GM10248 (cell line): ENCODE measurements at regions of chr2 and their contacts with region 1.

Region 1: GRCh38 chr2:129847043-129847442 is 132.4 kb upstream of the RAB6C start:
- DNase-seq: no peak
- CTCF ChIP-seq: no peak

Region 2: DNA sequence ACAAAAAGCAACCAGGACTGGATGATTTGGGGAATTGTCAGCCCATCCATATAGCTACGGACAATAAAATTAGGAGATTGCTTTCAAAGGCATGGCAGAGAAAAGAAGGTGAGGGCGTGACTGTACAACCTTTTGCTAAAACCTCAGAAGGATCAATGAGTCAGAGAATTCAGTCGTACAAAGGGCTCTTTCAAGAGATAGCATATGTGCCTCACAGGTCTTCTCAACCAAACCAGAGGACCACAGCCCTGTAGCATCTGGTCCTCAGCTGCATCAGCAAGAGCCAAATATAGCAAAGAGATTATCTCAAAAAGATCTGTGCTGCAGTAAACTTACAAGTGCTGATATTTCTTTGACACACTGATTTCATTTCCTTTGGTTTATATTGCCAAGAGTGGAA is 17.5 kb before region 1 on chr2:
- CTCF ChIA-PET with region 1: interaction called, 11 read pairs
- POLR2A ChIA-PET with region 1: no interaction called
- DNase-seq: no peak
- CTCF ChIP-seq: no peak